ENCODE measurements at regions of chr6 and their contacts with region 1.

Region 1: GRCh38 chr6:27157459-27158315 is 89.8 kb upstream of the PRSS16 start:
- ATAC-seq: peak; percentile 82 to 95 (median 92)
- H3K4me3 ChIP-seq: peak overlapping the region; percentile 4 to 41 (median 31)
- H3K27ac ChIP-seq: no peak overlapping the region
- H3K4me1 ChIP-seq: peaks cover 5% of the 10 kb centered on the region in 2 donors

Region 2: DNA sequence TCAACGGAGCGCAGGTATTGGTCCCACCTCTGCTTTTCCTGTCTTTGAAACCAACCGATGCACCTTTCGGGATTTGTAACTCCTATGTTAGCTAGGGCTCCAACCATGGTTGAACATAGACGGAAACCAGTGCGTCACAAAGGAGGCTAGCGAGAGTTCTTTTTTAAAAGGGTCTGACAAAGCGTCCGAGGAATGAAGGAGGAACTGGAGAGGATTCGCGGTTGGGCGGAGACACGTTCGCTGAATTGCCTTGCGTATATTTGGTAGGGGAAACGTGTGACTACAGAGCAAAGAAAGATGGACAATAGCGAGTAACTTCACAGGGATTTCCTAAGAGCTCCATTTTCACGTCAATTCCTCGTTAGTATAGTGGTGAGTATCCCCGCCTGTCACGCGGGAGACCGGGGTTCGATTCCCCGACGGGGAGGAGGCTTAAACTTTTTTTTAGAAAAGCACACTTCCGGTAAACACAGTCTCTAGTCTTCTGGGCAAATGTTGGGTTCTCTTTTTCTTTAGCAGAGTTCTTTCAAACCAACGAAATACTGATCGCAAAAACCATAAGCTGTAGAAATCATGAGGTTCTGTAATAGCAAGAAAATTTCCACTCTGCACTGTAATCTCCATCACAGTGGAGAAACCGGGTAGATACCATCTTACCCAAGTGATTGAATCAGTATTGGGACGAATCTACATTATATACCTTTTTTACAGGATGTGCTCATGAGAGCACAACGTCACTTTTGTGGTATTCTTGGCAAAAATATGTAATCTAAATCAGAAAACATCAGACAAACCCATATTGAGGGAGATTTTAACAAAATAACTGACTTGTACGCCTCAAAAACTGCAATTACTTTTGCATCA is 321.9 kb after region 1 on chr6:
- in situ Hi-C with region 1: loop called in 1 of 9 experiments (anchors 25 kb)
- ATAC-seq: peak; percentile 63 to 84 (median 77)
- H3K4me3 ChIP-seq: peak overlapping the region; percentile 43 to 67 (median 61)
- H3K27ac ChIP-seq: peak overlapping the region; percentile 44 to 75
- H3K4me1 ChIP-seq: no peaks in the 10 kb centered on the region

Region 3: DNA sequence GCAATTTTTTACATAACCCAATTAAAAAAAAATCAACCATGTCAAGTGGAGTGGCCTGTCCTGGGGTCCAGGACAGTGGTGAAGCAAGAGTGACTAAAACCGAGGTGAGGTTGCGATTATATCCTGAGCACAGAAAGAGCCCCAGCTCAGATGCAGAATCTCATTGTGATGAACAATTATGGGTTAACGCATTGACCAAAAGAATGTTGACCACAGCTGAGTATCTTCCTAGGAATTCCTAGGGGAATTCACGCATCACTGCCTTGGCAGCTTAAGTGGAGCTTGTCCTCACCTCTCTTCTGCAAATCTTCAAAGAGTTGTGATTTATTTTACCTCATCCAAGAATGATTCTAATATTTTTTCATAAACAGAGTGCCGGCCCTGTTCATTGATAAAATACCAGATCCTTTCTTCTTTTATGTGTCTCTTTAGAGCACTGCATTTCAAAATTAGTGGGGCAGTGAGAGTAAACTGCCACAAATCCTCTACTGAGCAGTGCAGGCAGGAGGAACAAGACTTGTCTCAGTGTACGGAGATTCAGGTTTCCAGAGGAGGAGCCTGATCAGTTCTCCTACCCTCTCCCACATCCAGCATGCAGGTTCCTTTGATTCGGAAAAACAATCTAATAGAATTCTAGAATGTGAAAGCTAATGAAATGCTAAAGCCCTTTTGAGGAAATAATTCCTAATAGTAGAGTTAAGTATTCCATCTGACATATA is 375.3 kb after region 1 on chr6:
- in situ Hi-C with region 1: no loop called
- ATAC-seq: peak in 1 of 8 experiments; percentile 20
- H3K4me3 ChIP-seq: no peak overlapping the region
- H3K27ac ChIP-seq: no peak overlapping the region
- H3K4me1 ChIP-seq: no peaks in the 10 kb centered on the region

Measured in motor neuron (in vitro differentiated cells).